Kidney (tissue), 22 donors: ENCODE measurements at regions of chr3 and their contacts with region 1.

Region 1: DNA sequence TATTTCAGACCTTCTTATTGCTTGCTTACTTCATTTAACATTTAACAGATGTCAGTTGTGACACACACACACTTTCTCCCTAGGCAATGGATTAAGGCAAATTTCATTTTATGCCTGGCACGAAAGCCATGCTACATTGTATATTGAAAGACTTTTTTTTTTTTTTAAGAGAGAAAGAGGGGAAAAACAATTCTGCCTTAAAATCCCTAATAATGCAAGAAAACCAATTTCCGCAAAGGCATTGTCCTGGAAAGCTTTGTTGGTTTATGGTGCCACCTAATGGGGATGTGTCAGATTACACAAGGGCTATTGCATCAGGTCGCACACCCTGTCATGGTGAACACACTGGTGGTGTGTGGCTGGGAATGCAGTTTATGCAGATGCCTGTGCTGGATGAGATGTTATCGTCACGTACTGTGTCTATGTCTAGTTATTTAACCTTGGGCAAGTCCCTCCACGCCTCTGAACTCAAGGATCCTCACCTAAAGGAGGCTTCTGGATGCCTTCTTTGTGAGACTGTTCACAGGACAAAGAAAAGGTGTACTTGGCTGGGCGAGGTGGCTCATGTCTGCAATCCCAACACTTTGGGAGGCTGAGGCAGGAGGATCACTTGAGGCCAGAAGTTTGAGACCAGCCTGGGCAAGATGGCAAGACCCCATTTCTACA is 37.3 kb upstream of the RFTN1 start:
- DNase-seq: peak in 4 of 5 donors; percentile 77 to 93 (median 87)
- H3K4me3 ChIP-seq: peak overlapping the region; percentile 6 to 43 (median 41)
- H3K27ac ChIP-seq: no peak overlapping the region
- H3K4me1 ChIP-seq: peaks cover 0 to 4% (median 0%) of the 10 kb centered on the region in 3 donors
- H3K27me3 ChIP-seq: no peaks in the 10 kb centered on the region
- CTCF ChIP-seq: peak; percentile 95

Region 2: DNA sequence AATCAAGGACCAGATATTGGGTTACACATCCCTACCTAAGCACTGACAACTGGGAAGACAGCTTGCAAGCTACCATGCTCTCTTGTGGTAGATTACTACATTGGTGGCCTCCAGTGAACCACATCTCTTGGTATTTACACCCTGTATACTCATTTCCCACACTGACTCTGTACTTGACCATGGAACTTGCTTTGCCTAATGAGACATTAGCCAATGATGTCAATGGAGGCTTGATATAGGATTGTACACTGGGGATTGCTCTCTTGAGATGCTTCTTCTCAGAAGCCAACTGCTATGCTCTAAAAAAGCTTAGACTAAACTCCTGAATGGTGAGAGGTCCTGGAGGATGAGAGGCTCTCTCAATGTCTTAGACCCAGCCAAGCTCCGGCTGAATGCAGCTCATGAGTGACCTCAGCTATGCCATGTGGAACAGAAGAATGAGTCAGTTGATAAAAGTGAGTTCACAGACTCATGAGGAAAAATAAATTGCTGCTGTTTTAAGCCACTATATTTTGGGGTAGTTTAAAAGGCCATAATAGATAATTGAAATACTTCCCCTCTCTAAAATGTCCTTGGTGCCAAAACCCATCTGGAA is 437.8 kb before region 1 on chr3:
- intact Hi-C with region 1: no loop called
- DNase-seq: no peak
- H3K4me3 ChIP-seq: no peak overlapping the region
- H3K27ac ChIP-seq: no peak overlapping the region
- H3K4me1 ChIP-seq: no peaks in the 10 kb centered on the region
- H3K27me3 ChIP-seq: no peaks in the 10 kb centered on the region
- CTCF ChIP-seq: no peak

Region 3: DNA sequence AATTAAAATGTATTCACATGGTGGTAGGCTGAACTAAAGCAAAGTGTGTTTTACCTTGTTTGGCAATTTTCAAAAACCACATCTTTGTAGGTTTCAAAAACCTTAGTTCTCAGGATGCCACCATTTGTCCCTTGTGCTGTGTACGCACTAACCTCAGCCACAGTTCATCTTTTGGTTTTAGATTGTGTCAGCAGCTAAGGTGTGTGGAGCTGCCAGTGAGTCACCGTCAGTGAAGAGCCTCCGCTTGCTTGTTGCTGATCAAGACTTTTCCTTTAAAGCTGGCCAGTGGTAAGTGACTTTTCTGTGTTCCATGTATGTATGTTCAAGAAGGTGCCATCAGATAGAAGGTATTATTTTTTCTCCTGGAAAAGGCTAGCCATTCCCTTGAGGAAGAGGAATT is 264.6 kb before region 1 on chr3:
- intact Hi-C with region 1: loop called (anchors 5 kb)
- DNase-seq: peak in 1 of 5 donors; percentile 46
- H3K4me3 ChIP-seq: no peak overlapping the region
- H3K27ac ChIP-seq: no peak overlapping the region
- H3K4me1 ChIP-seq: no peaks in the 10 kb centered on the region
- H3K27me3 ChIP-seq: no peaks in the 10 kb centered on the region
- CTCF ChIP-seq: no peak